Mammary epithelial cell (primary cell): ENCODE measurements at regions of chr12 and their contacts with region 1.

Region 1: GRCh38 chr12:94762259-94762942 is 112.0 kb upstream of the TMCC3 start:
- DNase-seq: peak; percentile 59
- H3K4me3 ChIP-seq: no peak overlapping the region
- H3K27ac ChIP-seq: peak overlapping the region; percentile 96
- H3K4me1 ChIP-seq: peaks cover 7% of the 10 kb centered on the region
- H3K27me3 ChIP-seq: no peaks in the 10 kb centered on the region
- CTCF ChIP-seq: no peak

Region 2: DNA sequence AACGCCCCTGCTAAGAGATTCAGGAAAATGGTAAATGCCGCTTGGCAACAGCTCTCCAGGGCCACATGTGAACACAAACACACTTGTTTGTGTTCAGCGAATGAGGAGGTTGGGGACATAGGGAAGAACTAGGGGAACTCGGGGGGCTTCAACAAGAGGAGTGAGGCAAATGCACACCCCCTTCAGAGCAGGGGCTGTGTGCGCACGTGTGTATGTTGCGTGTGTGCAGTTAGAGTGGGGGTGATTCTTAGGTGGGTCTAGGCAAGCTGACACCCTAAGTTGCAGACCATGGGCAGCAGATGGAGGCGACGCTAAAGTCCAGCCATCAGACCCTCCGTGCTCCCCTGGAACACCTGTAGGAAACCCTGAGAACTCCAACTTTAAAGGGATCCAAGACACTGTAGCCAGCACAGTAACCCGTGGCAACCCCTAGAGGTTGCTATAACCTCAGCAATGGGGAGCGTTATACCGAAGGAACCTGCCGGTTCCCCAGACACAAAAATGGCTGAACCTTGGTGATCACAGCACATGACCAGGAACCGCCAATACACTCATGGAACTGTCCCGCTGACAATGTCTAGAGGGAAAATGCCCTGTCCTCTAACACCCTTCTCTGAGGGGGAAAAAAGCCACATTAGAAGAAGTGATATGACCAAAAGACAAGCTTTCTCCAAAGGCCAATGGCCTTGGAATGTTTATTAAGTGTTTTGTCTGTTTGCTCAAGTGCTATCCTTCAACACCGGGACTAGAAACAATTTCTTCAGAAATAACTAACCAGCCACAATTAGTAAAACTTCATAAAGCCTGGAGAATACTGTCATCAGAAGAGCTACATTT is 216.2 kb before region 1 on chr12:
- CTCF ChIA-PET with region 1: interaction called, 4 read pairs
- dilution Hi-C with region 1: loop called (anchors 25 kb)
- in situ Hi-C with region 1: loop called (anchors 10 kb)
- intact Hi-C with region 1: loop called (anchors 1 kb)
- DNase-seq: peak; percentile 65
- H3K4me3 ChIP-seq: no peak overlapping the region
- H3K27ac ChIP-seq: no peak overlapping the region
- H3K4me1 ChIP-seq: peaks cover 5% of the 10 kb centered on the region
- H3K27me3 ChIP-seq: no peaks in the 10 kb centered on the region
- CTCF ChIP-seq: peak; percentile 88 to 95

Region 3: GRCh38 chr12:94603434-94604365 is 158.7 kb before region 1 on chr12:
- CTCF ChIA-PET with region 1: no interaction called
- dilution Hi-C with region 1: no loop called
- in situ Hi-C with region 1: no loop called
- intact Hi-C with region 1: loop called (anchors 1 kb)
- DNase-seq: no peak
- H3K4me3 ChIP-seq: no peak overlapping the region
- H3K27ac ChIP-seq: no peak overlapping the region
- H3K4me1 ChIP-seq: peaks cover 6% of the 10 kb centered on the region
- H3K27me3 ChIP-seq: no peaks in the 10 kb centered on the region
- CTCF ChIP-seq: peak; percentile 62 to 83

Region 4: DNA sequence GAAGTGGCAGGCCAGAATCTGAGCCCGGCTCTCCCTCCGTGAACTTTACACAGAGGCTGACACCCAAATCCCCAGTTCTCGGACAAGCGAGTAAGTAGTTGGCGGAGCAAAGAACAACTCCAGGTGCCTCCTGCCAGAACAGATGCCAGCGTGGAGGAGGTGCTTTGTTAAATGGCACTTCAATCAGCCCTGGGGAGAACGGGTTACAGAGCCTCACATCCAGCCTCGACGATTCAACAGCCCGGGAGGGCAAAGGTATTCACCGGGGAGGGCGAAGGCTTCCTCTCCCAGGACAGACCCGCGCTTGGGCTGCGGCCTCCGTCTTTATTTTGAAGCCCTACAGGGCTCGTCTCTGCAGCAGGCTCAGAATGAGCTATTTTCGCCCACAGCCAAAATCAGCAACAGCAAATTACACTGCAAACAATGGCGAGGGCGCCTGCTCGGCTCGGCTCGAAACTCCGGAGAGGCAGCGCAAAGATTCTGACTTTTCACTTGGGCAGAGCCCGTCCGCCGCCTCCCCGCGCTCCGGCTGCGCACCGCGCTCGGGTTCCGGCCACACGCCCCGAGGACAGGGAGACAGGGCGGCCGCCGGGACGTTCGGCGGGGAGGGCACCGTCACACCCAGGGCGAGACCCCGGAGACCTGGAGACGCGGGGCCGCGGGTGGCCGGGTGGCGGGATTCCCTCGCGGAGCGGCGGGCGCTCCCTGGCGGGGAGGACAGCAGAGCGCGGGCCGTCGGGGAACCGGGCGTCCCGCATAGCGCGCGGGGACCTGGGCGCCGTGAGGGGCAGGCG is 112.9 kb before region 1 on chr12:
- CTCF ChIA-PET with region 1: no interaction called
- dilution Hi-C with region 1: no loop called
- in situ Hi-C with region 1: no loop called
- intact Hi-C with region 1: loop called (anchors 1 kb)
- DNase-seq: peak; percentile 51
- H3K4me3 ChIP-seq: peak overlapping the region; percentile 73 to 92 (median 82)
- H3K27ac ChIP-seq: peak overlapping the region; percentile 63
- H3K4me1 ChIP-seq: peaks cover 27% of the 10 kb centered on the region
- H3K27me3 ChIP-seq: no peaks in the 10 kb centered on the region
- CTCF ChIP-seq: peak; percentile 19 to 53

Region 5: DNA sequence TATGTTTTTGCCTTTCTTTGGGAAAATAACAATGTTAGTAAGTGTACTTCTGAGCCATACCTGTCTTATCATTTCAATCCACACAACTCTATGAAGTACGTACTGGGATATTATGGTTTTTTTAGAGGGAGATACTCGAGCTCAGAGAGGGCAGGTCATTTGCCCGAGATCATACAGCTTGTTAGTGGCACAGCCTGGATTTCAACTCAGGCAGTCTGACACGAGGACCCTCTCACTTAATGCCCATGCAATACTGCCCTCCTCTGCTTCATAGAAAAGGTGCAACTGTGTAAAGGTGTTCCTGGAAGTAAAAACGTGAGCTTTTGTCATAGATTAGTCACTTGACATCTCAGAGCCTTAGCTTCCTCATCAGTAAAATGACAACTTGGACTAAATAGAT is 113.1 kb after region 1 on chr12:
- CTCF ChIA-PET with region 1: interaction called, 12 read pairs
- dilution Hi-C with region 1: no loop called
- in situ Hi-C with region 1: no loop called
- intact Hi-C with region 1: loop called (anchors 5 kb)
- DNase-seq: peak; percentile 47
- H3K4me3 ChIP-seq: no peak overlapping the region
- H3K27ac ChIP-seq: no peak overlapping the region
- H3K4me1 ChIP-seq: peaks cover 14% of the 10 kb centered on the region
- H3K27me3 ChIP-seq: peaks cover 24% of the 10 kb centered on the region
- CTCF ChIP-seq: peak in 1 of 2 donors; percentile 37

Region 6: DNA sequence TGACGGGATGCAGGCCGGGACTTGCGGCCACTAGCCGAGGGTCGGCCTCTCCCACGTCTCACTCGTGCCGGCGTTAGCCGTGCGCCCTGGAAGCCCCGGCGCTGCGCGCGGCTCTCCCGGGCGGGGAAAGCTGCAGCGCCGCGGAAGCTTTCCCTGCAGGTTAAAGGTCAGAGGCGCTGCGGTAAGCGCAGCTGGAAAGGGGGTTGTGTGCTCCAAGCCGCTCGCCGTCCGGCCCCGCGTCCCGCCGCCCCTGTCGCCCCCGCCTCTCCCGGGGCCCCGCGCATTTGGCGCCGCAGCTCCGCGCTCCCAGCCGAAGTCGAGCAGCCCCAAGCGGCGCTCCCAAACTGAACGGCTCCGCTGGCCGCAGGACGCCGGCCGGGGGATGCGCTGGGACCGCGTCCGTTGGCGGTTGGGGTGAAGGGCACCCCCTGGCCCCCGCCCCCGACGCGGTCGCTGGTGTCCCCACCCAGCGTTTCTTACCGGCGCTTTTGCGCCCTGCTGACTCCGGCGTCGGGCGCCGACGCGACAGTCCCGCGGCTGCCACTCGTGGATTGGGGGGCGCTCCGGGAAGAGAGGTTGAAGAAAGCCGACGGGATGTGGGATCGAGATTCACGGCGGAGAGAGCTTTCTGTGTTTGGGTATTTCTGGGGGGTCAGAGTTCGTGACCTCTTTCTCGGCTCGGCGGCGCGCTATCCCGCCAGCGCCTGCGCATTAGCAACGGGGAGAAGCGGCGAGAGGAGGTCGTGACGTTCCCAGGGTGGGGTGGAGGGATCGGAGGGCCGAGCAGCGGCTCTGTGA is 310.7 kb after region 1 on chr12 and contains the start of gene NR2C1:
- CTCF ChIA-PET with region 1: interaction called, 4 read pairs
- dilution Hi-C with region 1: no loop called
- in situ Hi-C with region 1: no loop called
- intact Hi-C with region 1: loop called (anchors 5 kb)
- DNase-seq: peak; percentile 87
- H3K4me3 ChIP-seq: peak within 1 kb of the TSS; percentile 90 to 94 (median 92)
- H3K27ac ChIP-seq: peak within 1 kb of the TSS; percentile 84
- H3K4me1 ChIP-seq: peaks cover 5% of the 10 kb centered on the region
- H3K27me3 ChIP-seq: no peaks in the 10 kb centered on the region
- CTCF ChIP-seq: no peak
- total RNA-seq, gene NR2C1: 23.2 to 32.8 TPM